Activated naive CD4-positive, alpha-beta T cell treated with anti-CD3 and anti-CD28 coated beads, Interleukin-2, amount 10 ng/mL, durations not matched to agents 7 days and 5 days (primary cell): ENCODE measurements at regions of chr17 and their contacts with region 1.

Region 1: DNA sequence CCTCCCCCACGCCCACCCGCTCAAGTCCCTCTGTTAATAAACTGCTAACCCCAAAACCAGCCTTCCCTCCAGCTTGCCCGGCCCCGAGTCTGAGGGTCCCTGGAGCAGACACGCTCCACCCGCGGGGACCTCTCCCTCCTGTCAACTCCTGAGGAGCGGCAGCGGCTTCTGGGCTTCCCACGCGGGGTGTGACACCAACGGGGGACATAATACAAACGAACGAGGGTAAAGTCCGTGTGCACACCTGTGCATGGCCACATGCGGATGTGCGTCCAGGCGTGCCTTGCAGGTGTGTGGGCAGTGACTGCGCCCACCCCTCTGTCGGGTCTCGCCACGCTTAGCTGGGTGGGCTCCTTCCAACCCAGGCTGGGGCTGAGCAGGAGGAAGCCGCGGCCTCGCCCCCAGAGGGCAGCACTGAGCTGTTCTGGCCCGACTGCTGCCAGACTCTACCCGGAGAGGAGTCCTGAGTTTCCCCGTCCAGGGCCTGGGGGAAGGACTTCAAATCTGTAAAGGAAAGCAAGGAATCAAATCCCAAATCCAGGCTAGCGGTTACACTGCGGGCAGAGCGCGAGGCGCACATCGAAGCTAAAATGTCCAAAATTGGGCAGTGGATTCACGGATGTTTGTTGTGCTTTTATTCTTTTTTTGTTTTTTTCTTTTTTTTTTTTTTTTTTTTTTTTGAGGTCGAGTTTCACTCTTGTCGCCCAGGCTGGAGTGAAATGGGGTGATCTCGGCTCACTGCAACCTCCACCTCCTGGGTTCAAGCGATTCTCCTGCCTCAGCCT is 24.2 kb upstream of the KRT17 start:
- DNase-seq: peak; percentile 88
- H3K4me3 Mint-ChIP-seq: peak overlapping the region; percentile 46
- H3K27ac Mint-ChIP-seq: no peak overlapping the region
- H3K4me1 Mint-ChIP-seq: peaks cover 10% of the 10 kb centered on the region
- H3K27me3 Mint-ChIP-seq: peaks cover 20% of the 10 kb centered on the region

Region 2: GRCh38 chr17:40909351-40909750 is 739.3 kb before region 1 on chr17:
- CTCF ChIA-PET with region 1: interaction called, 11 read pairs
- DNase-seq: peak; percentile 70
- H3K4me3 Mint-ChIP-seq: no peak overlapping the region
- H3K27ac Mint-ChIP-seq: no peak overlapping the region
- H3K4me1 Mint-ChIP-seq: no peaks in the 10 kb centered on the region
- H3K27me3 Mint-ChIP-seq: peaks cover 34% of the 10 kb centered on the region

Region 3: DNA sequence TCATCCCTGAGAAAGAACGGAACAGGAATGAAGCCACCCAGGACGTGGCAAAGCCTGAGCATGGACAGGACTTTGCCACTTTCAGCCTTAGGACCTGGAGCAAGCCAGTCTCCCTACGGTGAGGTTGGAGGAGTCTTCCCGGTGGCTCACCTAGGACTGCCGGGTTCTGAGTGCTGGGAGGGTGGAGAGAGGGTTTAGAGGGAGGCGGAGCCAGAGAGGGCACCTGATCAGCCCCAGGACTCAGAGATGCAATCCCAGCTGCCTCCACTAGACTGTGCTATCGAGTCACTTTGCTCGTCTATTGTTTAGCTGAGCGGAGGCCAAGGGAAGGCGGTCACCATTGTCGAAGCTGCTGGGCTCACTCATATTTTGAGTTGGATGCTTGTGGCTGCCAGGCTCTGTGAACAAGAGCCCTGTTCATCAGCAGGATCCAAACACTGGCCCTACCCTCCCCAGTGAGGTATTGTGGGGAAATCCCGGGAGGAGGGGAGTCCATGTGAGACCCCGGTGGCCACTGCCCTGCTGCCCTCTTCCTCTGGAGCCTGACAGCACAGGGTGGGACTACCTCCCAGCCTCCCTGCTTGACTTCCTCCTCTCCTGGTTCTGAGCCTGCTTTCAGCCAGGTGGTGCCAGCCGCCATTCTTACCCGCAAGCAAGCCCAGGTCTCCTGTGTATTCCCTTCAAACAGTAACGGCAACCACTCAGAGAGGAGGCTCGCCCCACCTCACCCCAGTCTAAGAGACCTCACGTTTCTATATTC is 68.9 kb before region 1 on chr17:
- CTCF ChIA-PET with region 1: interaction called, 10 read pairs
- DNase-seq: peak; percentile 85
- H3K4me3 Mint-ChIP-seq: no peak overlapping the region
- H3K27ac Mint-ChIP-seq: no peak overlapping the region
- H3K4me1 Mint-ChIP-seq: no peaks in the 10 kb centered on the region
- H3K27me3 Mint-ChIP-seq: peaks cover 80% of the 10 kb centered on the region

Region 4: GRCh38 chr17:41624208-41625101 is 24.1 kb before region 1 on chr17 and contains the start of gene KRT17:
- CTCF ChIA-PET with region 1: no interaction called
- DNase-seq: no peak
- H3K4me3 Mint-ChIP-seq: no peak within 1 kb of the TSS
- H3K27ac Mint-ChIP-seq: no peak within 1 kb of the TSS
- H3K4me1 Mint-ChIP-seq: no peaks in the 10 kb centered on the region
- H3K27me3 Mint-ChIP-seq: peaks cover 4% of the 10 kb centered on the region

Region 5: DNA sequence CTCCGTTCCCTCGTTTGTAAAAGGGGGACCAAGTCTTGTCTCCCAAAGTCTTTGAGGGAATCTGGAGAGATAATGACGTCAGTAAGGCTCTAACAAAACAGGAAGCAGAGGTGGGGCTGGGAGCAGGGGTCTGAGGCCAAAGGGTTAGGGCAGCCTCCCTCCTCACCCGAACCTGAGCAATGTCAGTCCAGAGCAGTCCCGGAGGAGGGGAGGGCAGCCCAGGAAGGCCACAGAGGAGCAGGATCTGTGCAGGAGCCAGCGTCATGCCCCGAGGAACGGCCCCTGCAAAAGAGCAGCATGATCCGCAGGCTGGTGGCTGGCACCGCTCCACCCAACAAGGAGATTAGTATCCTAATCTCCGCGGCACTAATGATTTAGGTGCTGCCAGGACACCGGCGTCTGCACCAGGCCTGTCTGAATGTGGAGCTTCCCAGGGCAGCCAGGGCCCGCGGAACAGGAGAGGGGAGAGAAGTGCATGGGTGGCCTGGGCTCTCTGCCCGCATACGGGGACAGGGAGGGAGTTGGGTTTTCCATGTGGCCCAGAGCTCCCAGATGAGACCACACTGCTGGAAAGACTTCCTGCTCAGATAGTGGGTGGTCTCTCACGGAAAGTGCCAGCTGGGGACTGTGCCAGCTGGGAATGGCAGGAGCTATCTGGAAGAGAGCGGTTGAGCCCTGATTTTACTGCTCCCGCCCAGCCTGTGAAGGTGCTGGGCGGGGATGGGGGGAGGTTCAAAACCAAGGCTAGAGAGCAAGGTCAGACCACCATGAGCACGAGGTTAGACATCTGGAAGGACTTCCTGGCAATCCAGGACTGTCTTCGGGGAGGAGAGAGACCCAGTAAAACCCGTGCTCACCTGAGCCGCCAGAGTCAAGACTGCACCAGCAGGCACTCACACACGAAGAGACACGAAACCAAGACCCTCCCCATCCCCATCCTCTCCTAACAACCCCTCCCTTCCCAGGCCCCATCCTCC is 13.2 kb before region 1 on chr17:
- CTCF ChIA-PET with region 1: interaction called, 15 read pairs
- DNase-seq: no peak
- H3K4me3 Mint-ChIP-seq: no peak overlapping the region
- H3K27ac Mint-ChIP-seq: no peak overlapping the region
- H3K4me1 Mint-ChIP-seq: no peaks in the 10 kb centered on the region
- H3K27me3 Mint-ChIP-seq: no peaks in the 10 kb centered on the region